ENCODE measurements at regions of chr14 and their contacts with region 1.

Region 1: DNA sequence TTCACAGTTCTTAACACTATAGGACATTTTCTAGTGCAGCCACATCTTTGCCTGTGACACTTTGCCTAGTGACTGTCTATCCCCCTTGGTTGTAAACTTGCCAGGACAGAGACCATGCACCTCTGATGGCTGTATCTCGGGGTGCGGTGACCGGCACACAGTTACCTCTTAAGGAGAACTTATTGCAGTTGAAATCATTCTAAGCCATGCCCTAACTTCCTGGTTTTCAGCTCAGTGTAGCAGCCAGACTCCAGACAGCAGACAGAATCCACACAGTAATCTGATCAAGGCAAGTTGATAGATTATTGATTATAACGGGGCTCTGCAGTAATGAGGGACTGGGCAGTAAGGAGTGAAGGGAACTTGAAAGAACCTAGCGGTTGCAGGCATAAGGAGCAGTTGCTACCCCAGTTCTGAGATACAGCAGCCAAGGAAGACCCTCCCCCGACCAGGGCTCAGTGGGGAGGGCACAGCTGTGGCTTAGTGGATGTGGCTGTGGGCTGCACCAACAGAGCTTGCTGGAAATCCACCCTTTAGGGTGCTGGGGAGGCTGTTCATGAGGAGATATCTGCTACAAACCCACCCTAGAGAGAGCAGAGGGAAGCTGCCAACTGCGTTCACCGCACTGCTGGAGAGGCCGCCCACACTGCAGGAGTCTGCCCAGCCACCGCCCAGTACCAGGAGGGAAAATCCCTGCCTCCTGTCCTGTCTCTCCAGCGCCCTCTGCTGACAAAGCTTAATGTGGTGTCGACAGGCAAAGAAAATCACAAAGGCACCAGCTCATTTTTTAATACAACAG is 58.2 kb upstream of the BEGAIN start:
- ATAC-seq: peak; percentile 63 to 96 (median 84)
- H3K4me3 ChIP-seq: no peak overlapping the region
- H3K27ac ChIP-seq: no peak overlapping the region
- H3K4me1 ChIP-seq: peaks cover 0 to 6% of the 10 kb centered on the region in 2 donors

Region 2: GRCh38 chr14:100383727-100384158 is 261.6 kb before region 1 on chr14:
- in situ Hi-C with region 1: loop called in 1 of 9 experiments (anchors 10 kb)
- ATAC-seq: peak; percentile 57 to 89 (median 76)
- H3K4me3 ChIP-seq: no peak overlapping the region
- H3K27ac ChIP-seq: no peak overlapping the region
- H3K4me1 ChIP-seq: peaks cover 37 to 46% of the 10 kb centered on the region in 2 donors

Region 3: GRCh38 chr14:100406505-100407131 is 238.8 kb before region 1 on chr14:
- in situ Hi-C with region 1: loop called in 2 of 9 experiments (anchors 10 to 25 kb)
- ATAC-seq: peak in 3 of 8 experiments; percentile 26 to 85 (median 83)
- H3K4me3 ChIP-seq: no peak overlapping the region
- H3K27ac ChIP-seq: peak overlapping the region; percentile 2 to 23
- H3K4me1 ChIP-seq: peaks cover 68 to 81% of the 10 kb centered on the region in 2 donors

Region 4: DNA sequence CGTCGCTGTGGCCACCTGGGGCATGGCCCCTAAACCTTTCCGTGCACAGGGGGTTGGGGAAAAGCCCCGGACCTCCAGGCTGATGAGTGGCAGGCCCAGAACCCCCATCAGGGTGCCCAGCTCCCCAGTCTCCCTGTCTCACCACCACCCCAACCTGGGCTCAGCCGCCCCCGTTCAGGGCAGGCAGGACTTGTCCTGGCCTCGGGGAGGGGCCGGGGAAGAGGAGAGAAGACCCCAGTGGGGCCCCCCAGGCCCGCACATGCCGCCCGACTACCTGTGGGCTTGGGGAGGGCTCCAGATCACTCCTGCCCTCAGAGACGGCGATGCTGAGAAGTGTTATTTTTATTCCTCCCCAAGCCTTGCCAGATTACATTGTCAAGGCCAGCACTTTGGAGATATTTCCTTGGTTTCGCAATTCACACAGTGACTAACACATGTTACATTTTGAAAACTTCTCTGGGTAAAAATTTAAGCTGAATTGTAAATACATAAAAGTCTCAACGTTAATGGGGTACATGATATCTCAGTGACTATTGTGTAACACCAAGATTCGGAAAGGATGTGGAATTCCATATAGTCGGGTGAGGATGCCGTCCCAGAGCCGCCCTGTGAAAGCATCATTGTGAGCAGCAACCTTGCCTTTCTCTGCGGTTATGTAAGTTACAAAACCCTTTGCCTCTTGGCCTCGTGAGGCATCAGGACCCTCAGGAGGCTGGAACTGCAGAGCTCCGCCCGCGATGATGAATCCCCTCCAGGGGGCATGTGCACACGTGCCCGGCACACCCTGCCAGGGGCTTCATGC is 830.3 kb after region 1 on chr14:
- in situ Hi-C with region 1: no loop called
- ATAC-seq: peak in 3 of 8 experiments; percentile 27 to 77 (median 72)
- H3K4me3 ChIP-seq: no peak overlapping the region
- H3K27ac ChIP-seq: no peak overlapping the region
- H3K4me1 ChIP-seq: peaks cover 28 to 31% of the 10 kb centered on the region in 2 donors